MCF 10A (cell line): ENCODE measurements at regions of chr1 and their contacts with region 1.

Region 1: GRCh38 chr1:25343872-25344271 is 5.7 kb downstream of the TMEM50A start:
- DNase-seq: peak; percentile 77
- H3K4me3 Mint-ChIP-seq: no peak overlapping the region
- H3K27ac Mint-ChIP-seq: peak overlapping the region; percentile 10
- H3K4me1 Mint-ChIP-seq: peaks cover 17% of the 10 kb centered on the region
- H3K27me3 Mint-ChIP-seq: no peaks in the 10 kb centered on the region
- CTCF ChIP-seq: no peak

Region 2: GRCh38 chr1:25232027-25232865 is 111.6 kb before region 1 on chr1 and contains the start of gene SYF2:
- CTCF ChIA-PET with region 1: no interaction called
- POLR2A ChIA-PET with region 1: interaction called, 25 read pairs
- intact Hi-C with region 1: no loop called
- DNase-seq: peak; percentile 91
- H3K4me3 Mint-ChIP-seq: no peak within 1 kb of the TSS
- H3K27ac Mint-ChIP-seq: no peak within 1 kb of the TSS
- H3K4me1 Mint-ChIP-seq: peaks cover 7% of the 10 kb centered on the region
- H3K27me3 Mint-ChIP-seq: no peaks in the 10 kb centered on the region
- CTCF ChIP-seq: no peak
- total RNA-seq, gene SYF2: 40.5 and 43.0 TPM in 2 replicates

Region 3: DNA sequence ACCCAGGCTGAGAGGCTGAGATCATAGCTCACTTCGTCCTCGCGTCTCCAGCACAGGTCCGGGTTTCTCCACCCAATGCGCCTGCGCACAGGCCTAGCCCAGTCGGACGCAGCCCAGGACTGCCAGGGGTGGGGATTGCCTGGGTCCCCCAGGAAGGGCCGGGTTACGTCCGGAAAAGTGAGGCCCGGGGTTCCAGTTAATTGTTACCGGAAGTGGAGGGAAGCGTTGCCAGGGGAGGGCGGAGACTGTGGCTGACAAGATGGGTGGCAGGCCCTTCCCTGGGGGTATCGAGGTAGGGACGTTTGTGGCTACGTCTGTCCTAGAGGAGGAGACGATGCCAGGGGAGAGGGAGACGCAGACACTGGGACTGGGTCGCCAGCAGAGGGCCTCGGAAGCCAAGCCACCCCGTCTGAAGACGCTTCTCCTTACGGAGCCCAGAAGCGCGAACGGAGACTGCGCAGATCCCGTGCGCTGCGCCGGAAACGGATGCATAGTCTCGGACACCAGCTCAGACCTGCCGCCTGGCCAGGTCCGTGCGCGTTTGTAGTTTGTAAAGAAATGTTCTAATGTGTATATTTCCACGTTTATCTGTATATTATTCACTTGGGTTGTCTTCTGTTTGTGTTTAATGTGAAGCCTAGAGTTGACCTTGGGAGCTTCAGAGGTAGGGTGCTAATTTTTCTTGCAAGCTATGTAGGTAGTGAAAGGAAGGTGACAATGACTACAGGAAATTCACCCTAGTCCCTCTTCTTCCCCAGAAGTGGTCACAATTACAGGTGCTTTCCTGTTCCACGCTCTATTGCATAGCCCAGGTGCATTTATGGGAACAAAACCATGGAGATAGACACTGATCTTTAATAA is 104.0 kb before region 1 on chr1:
- CTCF ChIA-PET with region 1: no interaction called
- POLR2A ChIA-PET with region 1: interaction called, 16 read pairs
- intact Hi-C with region 1: no loop called
- DNase-seq: peak; percentile 96
- H3K4me3 Mint-ChIP-seq: peak overlapping the region; percentile 78
- H3K27ac Mint-ChIP-seq: peak overlapping the region; percentile 85
- H3K4me1 Mint-ChIP-seq: peaks cover 24% of the 10 kb centered on the region
- H3K27me3 Mint-ChIP-seq: no peaks in the 10 kb centered on the region
- CTCF ChIP-seq: peak; percentile 48